Right ventricle myocardium inferior (tissue), 1 donor: ENCODE measurements at regions of chr17 and their contacts with region 1.

Region 1: GRCh38 chr17:27353461-27354050 is 59.6 kb downstream of the WSB1 start:
- DNase-seq: peak; percentile 96
- ATAC-seq: peak; percentile 96

Region 2: GRCh38 chr17:27256225-27257030 is 97.1 kb before region 1 on chr17:
- intact Hi-C with region 1: no loop called
- DNase-seq: no peak
- ATAC-seq: no peak

Region 3: DNA sequence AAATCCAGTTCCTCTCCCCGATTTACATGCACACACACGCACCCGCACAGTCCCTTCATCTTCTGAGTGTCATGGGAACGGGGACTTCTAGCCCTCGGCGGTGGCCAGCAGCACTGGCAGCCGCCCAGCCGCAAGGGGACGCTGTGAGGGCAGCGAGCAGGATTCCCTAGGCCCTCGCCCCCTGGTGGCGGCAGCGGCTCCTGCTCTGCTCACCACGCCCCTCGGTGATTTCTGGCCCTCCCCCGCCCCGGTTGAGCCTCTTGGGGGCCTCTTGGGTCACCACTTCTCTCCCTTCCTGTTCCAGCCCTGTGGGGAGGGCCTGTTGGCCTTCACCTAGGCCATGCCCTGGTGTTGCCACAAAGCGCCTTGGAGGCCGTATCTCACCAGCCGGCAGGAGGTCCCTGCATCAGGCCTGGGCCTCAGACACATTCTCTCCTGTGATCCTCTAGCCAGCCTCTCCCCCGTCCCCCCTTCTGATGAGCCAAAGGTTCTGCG is 27.5 kb after region 1 on chr17:
- intact Hi-C with region 1: loop called (anchors 2 kb)
- DNase-seq: peak; percentile 84
- ATAC-seq: peak; percentile 36

Region 4: DNA sequence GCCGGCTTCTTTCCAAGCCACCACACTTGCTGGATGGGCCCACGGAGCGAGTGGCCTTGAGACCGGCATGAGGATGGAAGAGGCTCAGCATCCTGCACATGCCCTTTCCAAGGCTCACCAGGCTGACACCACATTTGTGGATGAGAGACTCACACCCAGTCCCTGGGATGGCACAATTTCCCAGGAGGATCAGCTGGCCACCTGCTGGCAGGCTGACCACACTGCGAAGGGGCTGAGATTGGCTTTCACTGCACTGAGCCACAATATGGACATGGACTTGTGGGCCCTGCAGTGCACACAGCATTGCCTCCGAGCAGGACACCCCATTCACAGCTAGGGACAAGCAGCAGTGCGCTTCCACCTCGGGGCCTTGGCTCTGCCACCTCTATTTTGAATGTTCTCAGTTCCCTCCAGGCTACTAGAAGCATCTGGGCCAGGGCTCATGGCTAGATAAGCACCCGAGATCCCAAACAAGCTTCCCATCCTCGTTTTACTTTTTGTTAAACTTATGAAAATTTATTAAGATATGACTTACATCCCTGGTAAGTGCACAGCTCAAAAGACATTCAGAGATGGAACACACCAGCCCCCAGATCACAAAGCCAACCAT is 77.4 kb after region 1 on chr17:
- intact Hi-C with region 1: loop called (anchors 1 kb)
- DNase-seq: no peak
- ATAC-seq: peak; percentile 57

Region 5: DNA sequence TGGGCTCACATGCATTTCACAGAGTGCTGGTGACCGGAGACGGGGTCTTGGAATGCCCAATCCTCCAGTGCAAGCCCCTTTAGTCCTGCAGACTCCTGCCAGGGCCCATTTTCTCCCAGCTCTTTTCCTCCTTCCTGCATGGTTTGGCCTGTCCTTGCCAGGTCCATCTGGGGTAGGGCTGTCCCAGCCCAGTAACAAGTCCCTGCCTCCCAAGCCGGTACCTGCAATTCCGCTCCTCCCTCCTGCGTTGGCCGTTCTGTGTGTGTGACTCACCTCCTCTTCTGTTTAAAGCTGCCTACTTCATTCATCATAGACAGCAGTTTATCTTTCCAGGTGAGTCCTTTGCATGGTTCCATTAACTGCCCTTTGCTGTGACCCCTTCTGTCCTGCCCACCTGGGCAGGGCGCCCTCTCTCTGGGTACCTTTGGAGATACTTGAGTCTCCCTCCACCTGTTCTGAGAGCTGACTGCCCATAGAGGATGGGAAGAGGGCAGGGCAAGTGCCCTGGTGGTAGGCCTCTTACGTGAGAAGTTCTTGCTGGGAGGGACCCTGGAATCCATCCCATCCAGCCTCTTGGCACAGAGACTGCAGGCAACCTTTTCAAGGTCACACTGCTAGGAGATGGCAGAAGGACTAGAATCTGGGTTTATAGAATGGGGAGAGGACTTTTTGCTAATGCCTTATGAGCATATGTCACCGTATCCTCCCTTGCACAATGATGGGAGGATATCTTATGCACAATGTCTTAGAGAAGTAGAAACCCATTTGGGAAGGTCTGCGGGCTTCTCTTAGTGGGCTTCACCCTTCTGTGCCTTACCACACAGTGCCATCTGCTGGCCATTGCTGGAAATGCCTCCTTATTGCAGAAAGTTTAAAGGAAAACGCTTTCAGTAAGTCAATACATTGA is 247.8 kb after region 1 on chr17:
- intact Hi-C with region 1: loop called (anchors 1 kb)
- DNase-seq: peak; percentile 81
- ATAC-seq: peak; percentile 44

Region 6: GRCh38 chr17:27654654-27655524 is 301.3 kb after region 1 on chr17:
- intact Hi-C with region 1: loop called (anchors 5 kb)
- DNase-seq: peak; percentile 87
- ATAC-seq: no peak